ENCODE measurements at regions of chr12 and their contacts with region 1.

Region 1: DNA sequence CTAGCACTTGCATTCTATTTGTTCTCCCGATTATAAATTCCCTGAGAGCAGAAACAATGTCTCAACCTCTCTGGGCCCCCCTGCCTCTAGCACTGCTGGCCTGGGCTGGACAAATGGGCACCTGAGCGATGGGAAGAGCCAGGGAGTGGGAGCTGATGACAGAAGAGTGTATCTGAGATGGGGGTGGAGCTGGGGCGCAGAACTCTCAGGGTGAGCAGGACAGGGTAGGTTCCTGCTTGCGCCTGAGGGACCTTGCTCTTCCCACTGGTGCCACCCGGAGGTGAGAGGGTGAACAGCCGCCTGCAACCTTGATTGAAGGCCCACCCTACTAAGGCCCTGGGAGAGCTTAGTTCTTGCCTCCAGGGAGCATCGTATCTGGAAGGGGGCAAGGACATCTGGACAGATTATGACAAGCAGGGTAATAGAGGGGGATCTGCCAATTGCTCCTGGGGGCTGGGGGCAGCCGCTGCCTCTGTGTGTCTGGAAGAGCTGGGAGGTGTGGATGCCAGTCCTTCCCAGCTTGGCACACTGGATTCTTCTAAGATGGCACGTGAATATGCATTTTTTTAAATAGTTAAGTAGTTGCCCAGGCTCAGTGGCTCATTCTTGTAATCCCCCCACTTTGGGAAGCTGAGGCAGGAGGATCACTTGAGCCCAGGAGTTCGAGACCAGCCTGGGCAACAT is 43.0 kb upstream of the TSPAN9 start:
- DNase-seq: peak in 1 of 4 donors; percentile 61
- ATAC-seq: peak; percentile 87
- H3K4me3 ChIP-seq: no peak overlapping the region
- H3K27ac ChIP-seq: no peak overlapping the region
- H3K4me1 ChIP-seq: peaks cover 0 to 10% of the 10 kb centered on the region in 2 donors
- H3K27me3 ChIP-seq: no peaks in the 10 kb centered on the region
- CTCF ChIP-seq: peak; percentile 48 to 53

Region 2: DNA sequence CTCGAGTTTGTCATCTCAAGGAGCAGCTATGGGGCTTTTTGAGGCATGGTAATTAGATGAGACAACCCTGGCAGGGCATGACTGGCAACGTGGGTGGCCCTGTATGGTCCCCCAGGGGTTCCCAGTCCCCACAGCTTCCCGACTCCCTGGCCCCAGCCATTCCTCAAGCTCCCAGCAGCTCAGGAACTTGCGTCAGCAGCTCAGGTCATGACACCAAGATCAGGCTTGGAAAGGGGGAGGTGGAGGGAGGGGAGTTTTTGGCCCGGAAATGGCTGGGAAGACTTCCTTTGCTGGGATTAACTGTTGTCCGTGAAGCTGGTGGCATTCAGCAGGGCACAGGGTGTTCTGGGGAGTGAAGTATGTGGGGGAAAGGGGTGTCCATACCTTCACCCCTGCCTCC is 188.9 kb before region 1 on chr12:
- intact Hi-C with region 1: loop called in 1 of 2 experiments (anchors 10 kb)
- DNase-seq: peak in 1 of 4 donors; percentile 41
- ATAC-seq: no peak
- H3K4me3 ChIP-seq: no peak overlapping the region
- H3K27ac ChIP-seq: no peak overlapping the region
- H3K4me1 ChIP-seq: no peaks in the 10 kb centered on the region
- H3K27me3 ChIP-seq: no peaks in the 10 kb centered on the region
- CTCF ChIP-seq: no peak

Region 3: DNA sequence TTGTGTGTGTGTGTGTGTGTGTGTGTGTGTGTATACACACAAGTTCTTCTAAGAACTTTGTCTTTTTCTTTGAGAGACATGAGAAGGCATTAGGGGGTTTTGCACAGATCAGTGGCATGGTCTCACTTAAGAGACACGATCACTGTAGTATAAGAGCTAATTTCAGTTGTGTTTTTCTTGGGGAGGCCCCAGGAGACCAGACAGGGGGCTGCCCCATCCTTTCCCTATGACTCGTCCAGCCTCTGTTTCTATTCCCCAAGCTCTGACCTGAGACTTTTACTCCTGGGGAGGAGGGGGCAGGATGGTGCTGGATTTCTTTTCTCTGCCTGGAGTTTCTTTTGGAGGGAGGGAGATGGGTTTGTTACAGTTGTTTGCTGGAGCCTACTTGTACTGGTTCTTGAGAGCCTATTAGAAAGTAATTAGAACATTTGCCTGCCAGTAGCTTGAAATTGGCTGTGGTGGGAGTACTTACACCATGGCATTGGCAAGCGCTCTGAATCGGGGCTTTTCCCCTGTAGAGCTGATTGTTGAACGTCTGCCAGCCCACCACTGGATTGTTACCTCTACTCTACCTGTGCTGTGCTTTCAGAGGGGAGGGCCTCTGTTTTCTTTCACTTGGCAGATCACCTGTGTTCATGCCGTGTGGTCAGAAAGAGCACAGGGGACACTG is 152.5 kb after region 1 on chr12:
- intact Hi-C with region 1: no loop called
- DNase-seq: peak in 1 of 4 donors; percentile 23
- ATAC-seq: no peak
- H3K4me3 ChIP-seq: no peak overlapping the region
- H3K27ac ChIP-seq: no peak overlapping the region
- H3K4me1 ChIP-seq: peaks cover 0 to 28% of the 10 kb centered on the region in 2 donors
- H3K27me3 ChIP-seq: no peaks in the 10 kb centered on the region
- CTCF ChIP-seq: no peak

Measured in left lung (tissue), 14 donors.